ENCODE measurements at regions of chr4 and their contacts with region 1.

Region 1: GRCh38 chr4:83503974-83504373 is 19.1 kb upstream of the ABRAXAS1 start:
- DNase-seq: peak in 6 of 9 donors; percentile 15 to 62 (median 47)
- ATAC-seq: peak; percentile 62
- H3K4me3 ChIP-seq: peak overlapping the region; percentile 1
- H3K4me3 Mint-ChIP-seq: peak overlapping the region; percentile 4 to 70 (median 51)
- H3K27ac ChIP-seq: peak overlapping the region; percentile 51
- H3K27ac Mint-ChIP-seq: peak overlapping the region in 8 of 9 donors; percentile 26 to 94 (median 89)
- H3K4me1 ChIP-seq: peaks cover 3 to 17% of the 10 kb centered on the region in 2 donors
- H3K4me1 Mint-ChIP-seq: peaks cover 10 to 24% (median 18%) of the 10 kb centered on the region in 7 donors
- H3K27me3 ChIP-seq: no peaks in the 10 kb centered on the region
- H3K27me3 Mint-ChIP-seq: no peaks in the 10 kb centered on the region

Region 2: GRCh38 chr4:83535520-83536361 is 31.8 kb after region 1 on chr4 and contains the start of gene GPAT3:
- CTCF ChIA-PET with region 1: no interaction called
- POLR2A ChIA-PET with region 1: no interaction called
- intact Hi-C with region 1: loop called in 1 of 2 experiments (anchors 2 kb)
- DNase-seq: peak; percentile 37 to 76 (median 58)
- ATAC-seq: peak; percentile 89
- H3K4me3 ChIP-seq: peak within 1 kb of the TSS; percentile 80
- H3K4me3 Mint-ChIP-seq: peak within 1 kb of the TSS; percentile 87 to 97 (median 90)
- H3K27ac ChIP-seq: peak within 1 kb of the TSS; percentile 56
- H3K27ac Mint-ChIP-seq: peak within 1 kb of the TSS; percentile 24 to 92 (median 73)
- H3K4me1 ChIP-seq: peaks cover 0 to 8% of the 10 kb centered on the region in 2 donors
- H3K4me1 Mint-ChIP-seq: peaks cover 13 to 37% (median 17%) of the 10 kb centered on the region in 7 donors
- H3K27me3 ChIP-seq: no peaks in the 10 kb centered on the region
- H3K27me3 Mint-ChIP-seq: peaks cover 0 to 59% (median 20%) of the 10 kb centered on the region in 5 donors
- total RNA-seq, gene GPAT3: 3.0 to 14.6 (median 5.8) TPM

Region 3: GRCh38 chr4:83548151-83548905 is 44.4 kb after region 1 on chr4:
- CTCF ChIA-PET with region 1: no interaction called
- POLR2A ChIA-PET with region 1: no interaction called
- intact Hi-C with region 1: loop called in 1 of 2 experiments (anchors 5 kb)
- DNase-seq: peak in 2 of 9 donors; percentile 15 to 57
- ATAC-seq: peak; percentile 79
- H3K4me3 ChIP-seq: no peak overlapping the region
- H3K4me3 Mint-ChIP-seq: peak overlapping the region in 1 of 10 donors; percentile 20
- H3K27ac ChIP-seq: no peak overlapping the region
- H3K27ac Mint-ChIP-seq: peak overlapping the region in 1 of 9 donors; percentile 55
- H3K4me1 ChIP-seq: no peaks in the 10 kb centered on the region
- H3K4me1 Mint-ChIP-seq: peaks cover 0 to 24% (median 0%) of the 10 kb centered on the region in 7 donors
- H3K27me3 ChIP-seq: no peaks in the 10 kb centered on the region
- H3K27me3 Mint-ChIP-seq: no peaks in the 10 kb centered on the region

Region 4: GRCh38 chr4:83582289-83582769 is 78.4 kb after region 1 on chr4:
- CTCF ChIA-PET with region 1: no interaction called
- POLR2A ChIA-PET with region 1: no interaction called
- intact Hi-C with region 1: loop called in 1 of 2 experiments (anchors 1 kb)
- DNase-seq: peak in 1 of 9 donors; percentile 1
- ATAC-seq: peak; percentile 34
- H3K4me3 ChIP-seq: no peak overlapping the region
- H3K4me3 Mint-ChIP-seq: no peak overlapping the region
- H3K27ac ChIP-seq: no peak overlapping the region
- H3K27ac Mint-ChIP-seq: no peak overlapping the region
- H3K4me1 ChIP-seq: no peaks in the 10 kb centered on the region
- H3K4me1 Mint-ChIP-seq: no peaks in the 10 kb centered on the region
- H3K27me3 ChIP-seq: no peaks in the 10 kb centered on the region
- H3K27me3 Mint-ChIP-seq: peaks cover 0 to 6% (median 3%) of the 10 kb centered on the region in 5 donors

Measured in naive thymus-derived CD4-positive, alpha-beta T cell (primary cell).